ENCODE measurements at regions of chr6 and their contacts with region 1.

Region 1: GRCh38 chr6:3751730-3752542 is 423 bp upstream of the PXDC1 start:
- DNase-seq: peak; percentile 91 to 93 (median 92)
- ATAC-seq: peak; percentile 59 to 83 (median 75)
- H3K4me3 ChIP-seq: peak overlapping the region; percentile 76 to 99 (median 90)
- H3K27ac ChIP-seq: peak overlapping the region; percentile 87 to 100 (median 98)
- H3K4me1 ChIP-seq: peaks cover 6 to 56% (median 37%) of the 10 kb centered on the region in 12 donors
- H3K27me3 ChIP-seq: peaks cover 0 to 7% (median 0%) of the 10 kb centered on the region in 9 donors
- CTCF ChIP-seq: peak in 10 of 12 donors; percentile 14 to 59 (median 40)
- POLR2A ChIP-seq: peak in 1 of 2 donors; percentile 75

Region 2: DNA sequence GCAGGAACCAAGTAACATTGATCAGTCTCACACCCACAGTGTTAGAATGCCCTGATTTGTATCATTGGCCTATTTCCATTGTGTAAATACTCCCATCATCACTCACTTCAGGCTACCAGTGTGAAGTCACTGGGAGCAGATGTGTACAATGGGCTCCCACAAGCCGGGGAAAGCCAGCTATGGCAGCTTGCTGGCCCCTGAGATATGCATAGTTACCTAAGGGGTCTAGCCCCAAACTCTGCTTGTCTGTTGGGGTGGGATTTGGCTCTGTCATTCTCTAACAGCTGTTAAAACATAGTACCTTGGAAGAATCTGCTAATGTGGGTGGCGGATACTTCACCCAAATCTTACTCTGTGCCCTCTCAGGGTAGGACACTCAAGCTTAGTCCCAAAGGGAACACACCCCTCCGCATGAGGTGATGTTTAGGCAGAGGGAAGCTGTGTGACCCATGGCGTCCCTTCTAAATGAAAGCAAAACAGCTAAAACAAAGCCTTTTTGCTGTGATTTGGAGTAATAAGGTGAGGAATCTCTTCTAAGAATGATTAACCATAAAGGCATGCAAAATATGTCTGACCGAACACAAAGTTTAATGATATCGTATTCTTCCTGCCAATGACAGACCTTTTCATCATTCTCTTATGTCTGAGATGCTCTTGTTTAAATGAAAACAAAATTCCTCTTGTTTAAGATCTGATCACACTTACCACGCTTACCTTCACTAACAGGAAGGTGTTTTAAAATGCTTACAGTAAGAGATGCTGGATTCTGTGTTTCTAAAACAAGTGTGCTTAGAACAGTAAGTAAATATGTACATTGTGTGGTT is 45.5 kb after region 1 on chr6:
- intact Hi-C with region 1: loop called in 5 of 10 experiments (anchors 2 to 10 kb)
- DNase-seq: no peak
- ATAC-seq: peak in 1 of 4 donors; percentile 3
- H3K4me3 ChIP-seq: no peak overlapping the region
- H3K27ac ChIP-seq: peak overlapping the region in 7 of 12 donors; percentile 11 to 59 (median 49)
- H3K4me1 ChIP-seq: peaks cover 11 to 51% (median 32%) of the 10 kb centered on the region in 12 donors
- H3K27me3 ChIP-seq: no peaks in the 10 kb centered on the region
- CTCF ChIP-seq: no peak
- POLR2A ChIP-seq: no peak

Region 3: DNA sequence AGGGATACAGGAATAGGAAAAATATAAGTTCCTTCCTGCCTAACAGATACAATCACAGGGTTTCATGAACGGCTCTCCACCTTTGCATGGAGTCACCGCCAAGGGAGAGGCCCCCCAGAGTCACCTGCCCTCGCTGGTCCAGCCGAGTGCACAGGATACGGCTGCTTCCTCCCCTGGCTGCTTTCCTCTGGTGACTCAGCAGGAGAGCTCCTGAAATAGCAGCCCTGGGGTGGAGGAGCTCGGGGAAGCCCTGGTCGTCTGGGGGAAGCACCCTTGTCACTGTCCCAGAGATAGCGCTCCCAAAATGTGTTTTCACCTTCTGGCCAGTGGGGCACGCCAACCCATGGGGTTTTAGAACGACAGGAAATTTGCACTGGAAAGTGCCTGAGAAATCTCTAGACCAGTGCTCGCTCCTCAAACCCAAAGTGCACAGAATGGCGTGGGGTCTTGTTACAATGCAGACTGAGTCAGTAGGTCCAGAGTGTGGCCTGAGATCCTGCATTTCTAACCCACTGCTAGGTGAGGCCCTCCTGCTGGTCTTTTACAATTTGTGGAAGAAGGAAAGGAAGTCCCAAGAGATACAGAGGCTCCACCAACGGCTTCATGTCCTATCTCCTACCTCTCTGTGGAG is 61.3 kb after region 1 on chr6:
- intact Hi-C with region 1: loop called in 5 of 10 experiments (anchors 5 to 10 kb)
- DNase-seq: peak; percentile 77 to 86 (median 80)
- ATAC-seq: peak; percentile 73 to 98 (median 92)
- H3K4me3 ChIP-seq: no peak overlapping the region
- H3K27ac ChIP-seq: peak overlapping the region in 6 of 12 donors; percentile 1 to 64 (median 28)
- H3K4me1 ChIP-seq: peaks cover 0 to 29% (median 25%) of the 10 kb centered on the region in 12 donors
- H3K27me3 ChIP-seq: no peaks in the 10 kb centered on the region
- CTCF ChIP-seq: peak in 1 of 12 donors; percentile 28
- POLR2A ChIP-seq: no peak

Region 4: DNA sequence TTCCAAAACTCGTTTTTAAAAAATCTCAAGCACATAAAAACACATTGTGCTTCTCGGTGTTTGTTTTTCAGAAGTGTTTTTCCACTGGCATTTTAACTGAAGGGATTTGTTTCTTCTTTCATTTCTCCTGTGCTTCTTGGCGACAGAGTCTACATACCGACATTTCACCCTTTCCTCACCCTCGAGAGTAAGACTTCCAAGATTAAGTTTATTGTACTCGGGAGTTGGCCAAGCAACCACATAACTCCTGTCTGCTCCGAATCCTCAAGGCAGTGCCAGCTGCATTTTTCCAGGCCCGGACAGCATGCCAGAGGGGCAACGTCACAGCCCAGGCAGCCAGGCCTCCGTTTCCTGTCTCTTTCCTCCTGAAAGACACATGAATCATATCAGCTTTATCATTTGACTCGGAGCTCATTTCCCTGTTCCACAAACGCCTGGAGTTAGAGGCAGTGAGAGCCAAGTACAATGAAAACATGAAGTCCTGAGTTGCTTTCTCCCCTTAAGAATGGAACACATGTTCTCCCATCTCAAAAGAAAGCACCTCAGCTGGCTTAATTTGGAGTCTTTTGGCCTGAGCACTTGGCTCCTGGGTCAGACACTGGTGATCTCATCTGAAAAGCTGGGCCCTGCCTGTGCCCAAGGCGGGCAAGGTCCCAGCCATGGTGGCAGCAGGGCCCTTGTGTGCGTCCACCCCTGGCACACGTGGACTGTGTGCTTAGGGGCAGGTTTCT is 74.1 kb after region 1 on chr6:
- intact Hi-C with region 1: loop called in 8 of 10 experiments (anchors 1 to 5 kb)
- DNase-seq: peak; percentile 79 to 94 (median 86)
- ATAC-seq: peak; percentile 74 to 96 (median 94)
- H3K4me3 ChIP-seq: peak overlapping the region in 10 of 12 donors; percentile 2 to 41 (median 14)
- H3K27ac ChIP-seq: peak overlapping the region; percentile 82 to 94 (median 87)
- H3K4me1 ChIP-seq: peaks cover 9 to 45% (median 32%) of the 10 kb centered on the region in 12 donors
- H3K27me3 ChIP-seq: no peaks in the 10 kb centered on the region
- CTCF ChIP-seq: no peak
- POLR2A ChIP-seq: peak in 1 of 2 donors; percentile 30

Region 5: DNA sequence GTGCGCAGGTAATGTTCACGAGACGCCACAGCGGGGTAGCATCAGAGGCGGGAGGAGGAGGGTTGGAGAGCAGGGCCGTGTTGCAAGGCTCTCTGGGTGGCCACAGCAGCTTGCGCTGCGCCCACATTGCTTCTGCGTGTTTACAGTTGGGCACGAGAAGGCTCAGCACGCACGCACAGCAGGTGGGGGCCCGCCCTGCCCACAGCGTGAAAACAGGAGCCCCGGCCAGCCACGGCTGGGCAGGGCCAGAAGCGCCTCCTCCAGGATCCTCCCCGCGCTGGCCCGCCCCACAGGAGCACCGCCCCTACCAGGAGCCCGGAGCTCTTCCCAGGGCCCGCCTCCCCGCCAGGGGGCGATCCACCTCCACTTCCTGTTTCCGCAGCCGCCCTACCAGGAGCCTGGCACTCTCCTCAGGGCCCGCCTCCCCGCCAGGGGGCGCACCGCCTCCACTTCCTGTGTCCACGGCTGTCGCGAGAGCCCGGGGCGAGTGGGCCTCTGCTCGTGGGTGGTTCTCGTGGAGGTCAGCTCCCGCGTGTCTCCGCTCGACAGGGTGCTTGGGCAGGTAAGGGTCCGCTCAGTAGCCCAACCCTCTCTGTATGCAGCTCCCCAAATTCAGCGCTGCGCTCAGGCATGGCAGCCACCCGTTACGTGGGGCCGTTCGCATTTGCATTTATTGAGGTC is 97.1 kb after region 1 on chr6 and contains the start of gene FAM50B:
- intact Hi-C with region 1: loop called in 1 of 10 experiments (anchors 5 kb)
- DNase-seq: peak; percentile 93 to 96 (median 94)
- ATAC-seq: peak; percentile 95 to 98 (median 98)
- H3K4me3 ChIP-seq: peak within 1 kb of the TSS; percentile 19 to 69 (median 53)
- H3K27ac ChIP-seq: peak within 1 kb of the TSS in 11 of 12 donors; percentile 53 to 83 (median 72)
- H3K4me1 ChIP-seq: peaks cover 0 to 20% (median 2%) of the 10 kb centered on the region in 12 donors
- H3K27me3 ChIP-seq: no peaks in the 10 kb centered on the region
- CTCF ChIP-seq: peak; percentile 91 to 99 (median 94)
- POLR2A ChIP-seq: no peak
- total RNA-seq, gene FAM50B: 13.6 to 29.1 (median 21.5) TPM

Region 6: DNA sequence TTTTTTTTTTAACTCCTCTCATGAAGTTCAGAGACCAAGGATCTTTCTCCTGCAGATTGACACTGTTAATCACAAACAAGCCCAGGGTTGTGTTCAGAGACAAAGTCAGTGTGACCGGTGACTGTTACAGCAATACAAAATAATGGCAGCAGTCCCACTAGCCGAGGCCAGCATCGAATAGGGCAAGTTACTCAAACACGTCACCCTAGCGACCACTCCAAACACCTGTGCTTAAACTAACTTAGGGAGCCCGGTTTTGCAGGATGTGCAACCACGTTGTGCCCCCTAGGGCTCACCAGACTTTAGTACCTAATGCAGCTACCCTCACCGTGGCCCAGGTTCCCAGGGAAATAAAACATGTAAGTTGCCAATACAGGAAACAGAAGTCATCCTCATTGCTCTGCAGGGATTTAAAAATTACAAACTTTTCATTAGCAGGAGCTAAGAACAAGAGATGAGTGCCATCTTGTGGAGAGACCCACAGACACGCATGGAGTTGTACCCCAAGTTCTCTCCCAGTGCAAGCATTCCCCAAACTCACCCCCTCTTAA is 135.3 kb after region 1 on chr6:
- intact Hi-C with region 1: loop called in 3 of 10 experiments (anchors 2 kb)
- DNase-seq: no peak
- ATAC-seq: peak in 3 of 4 donors; percentile 23 to 36 (median 25)
- H3K4me3 ChIP-seq: no peak overlapping the region
- H3K27ac ChIP-seq: peak overlapping the region in 1 of 12 donors; percentile 23
- H3K4me1 ChIP-seq: peaks cover 0 to 52% (median 26%) of the 10 kb centered on the region in 12 donors
- H3K27me3 ChIP-seq: no peaks in the 10 kb centered on the region
- CTCF ChIP-seq: peak; percentile 37 to 70 (median 56)
- POLR2A ChIP-seq: no peak

Region 7: DNA sequence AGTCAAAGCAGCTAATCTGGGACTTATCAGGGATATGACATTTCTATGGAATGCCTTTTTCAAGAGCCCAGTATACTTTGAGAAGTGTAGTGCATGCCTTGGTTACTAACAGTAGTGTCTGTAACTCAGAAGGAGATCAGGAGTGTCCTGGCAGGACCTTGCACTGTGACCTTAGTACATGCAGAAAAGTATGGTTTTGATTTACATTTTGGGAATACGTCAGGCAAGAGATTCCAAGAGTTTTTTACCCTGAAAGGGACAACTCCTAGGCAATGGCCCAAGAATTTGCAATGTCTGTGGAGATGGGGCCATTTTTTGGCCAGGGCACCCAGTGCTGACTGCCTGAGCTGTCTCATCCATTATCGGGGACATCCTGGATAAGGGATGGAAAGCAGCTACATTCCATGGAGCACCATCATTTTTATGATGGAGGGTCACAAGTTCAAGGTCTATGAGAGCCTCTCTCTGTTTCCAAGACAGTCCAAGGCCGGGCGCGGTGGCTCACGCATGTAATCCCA is 177.4 kb after region 1 on chr6:
- intact Hi-C with region 1: loop called in 1 of 10 experiments (anchors 2 kb)
- DNase-seq: peak in 1 of 5 donors; percentile 46
- ATAC-seq: peak in 1 of 4 donors; percentile 36
- H3K4me3 ChIP-seq: no peak overlapping the region
- H3K27ac ChIP-seq: peak overlapping the region in 3 of 12 donors; percentile 15 to 64 (median 26)
- H3K4me1 ChIP-seq: peaks cover 0 to 33% (median 9%) of the 10 kb centered on the region in 12 donors
- H3K27me3 ChIP-seq: no peaks in the 10 kb centered on the region
- CTCF ChIP-seq: no peak
- POLR2A ChIP-seq: no peak

Measured in heart left ventricle (tissue), 16 donors.